Heart right ventricle (tissue), 16 donors: ENCODE measurements at regions of chr1 and their contacts with region 1.

Region 1: GRCh38 chr1:26874896-26875295 is 11.9 kb downstream of the SFN start:
- DNase-seq: no peak
- ATAC-seq: no peak
- H3K4me3 ChIP-seq: no peak overlapping the region
- H3K27ac ChIP-seq: no peak overlapping the region
- H3K4me1 ChIP-seq: peaks cover 0 to 5% (median 0%) of the 10 kb centered on the region in 9 donors
- H3K27me3 ChIP-seq: no peaks in the 10 kb centered on the region
- CTCF ChIP-seq: no peak

Region 2: DNA sequence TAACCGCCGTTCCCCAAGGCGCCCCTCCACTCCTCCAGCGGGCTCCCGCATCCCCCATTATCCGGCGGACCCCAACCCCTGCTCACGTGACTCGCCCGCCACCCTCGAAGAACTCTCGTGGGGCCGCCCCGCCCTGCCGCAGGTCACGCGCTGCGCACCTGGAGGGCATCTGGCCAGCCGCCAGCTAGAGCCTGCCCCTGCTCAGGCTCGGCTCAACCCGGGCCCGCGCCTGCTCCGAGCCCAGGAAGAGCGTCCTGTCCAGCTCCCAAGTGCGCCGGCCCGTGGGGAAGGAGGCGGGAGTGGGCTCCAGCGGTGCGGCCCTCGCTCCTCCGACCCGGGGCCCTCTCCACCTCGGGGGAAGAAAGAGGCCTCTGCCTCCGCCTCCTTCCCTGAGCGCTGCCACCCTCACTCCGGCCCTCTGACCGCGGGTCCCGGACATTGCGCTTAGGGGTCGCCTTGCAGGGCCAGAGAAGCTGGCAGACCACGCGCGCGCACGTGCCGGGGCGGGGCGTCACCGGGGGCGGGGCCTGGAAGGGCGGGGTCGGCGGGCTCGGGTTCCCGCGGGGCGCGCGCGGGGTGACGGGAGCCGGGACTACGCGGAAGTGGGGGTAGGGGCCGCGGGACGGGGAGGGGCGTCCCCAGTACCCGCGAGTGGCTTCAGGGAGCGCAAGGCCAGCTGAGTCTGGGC is 374.3 kb before region 1 on chr1:
- intact Hi-C with region 1: loop called in 1 of 10 experiments (anchors 10 kb)
- DNase-seq: peak; percentile 88 to 93
- ATAC-seq: peak; percentile 92 to 95 (median 94)
- H3K4me3 ChIP-seq: peak overlapping the region; percentile 15 to 90 (median 75)
- H3K27ac ChIP-seq: peak overlapping the region; percentile 77 to 98 (median 95)
- H3K4me1 ChIP-seq: peaks cover 2 to 21% (median 16%) of the 10 kb centered on the region in 9 donors
- H3K27me3 ChIP-seq: no peaks in the 10 kb centered on the region
- CTCF ChIP-seq: peak in 4 of 9 donors; percentile 7 to 37 (median 29)

Region 3: DNA sequence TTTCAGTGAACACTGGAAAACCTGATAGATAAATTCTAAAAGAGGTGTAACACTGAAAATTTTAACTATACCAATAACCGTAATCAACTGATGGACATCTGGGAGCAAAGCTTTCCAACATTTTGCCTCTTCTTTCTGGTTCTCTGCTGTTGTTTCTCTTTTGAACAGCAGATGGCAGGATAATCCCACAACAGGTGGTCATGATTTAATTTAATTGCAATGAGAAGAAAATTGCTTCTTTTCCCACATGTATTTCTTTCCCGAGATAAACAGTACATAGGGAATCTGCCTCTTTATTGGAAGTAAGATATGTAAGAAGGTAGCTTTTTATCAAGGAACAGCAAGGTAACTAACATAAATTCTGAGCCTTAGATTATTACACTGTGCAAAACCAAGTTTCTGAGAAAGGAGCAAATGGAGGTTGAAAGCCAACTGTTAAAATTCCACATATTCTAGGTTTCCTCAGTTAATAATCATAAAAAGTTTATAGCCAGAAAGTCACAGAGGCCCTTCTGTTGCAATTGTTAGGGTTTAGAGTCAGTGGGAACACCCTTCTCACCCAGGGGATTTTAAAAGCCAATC is 272.4 kb before region 1 on chr1:
- intact Hi-C with region 1: loop called in 9 of 10 experiments (anchors 1 to 5 kb)
- DNase-seq: peak in 1 of 2 donors; percentile 70
- ATAC-seq: peak in 3 of 8 donors; percentile 46 to 54 (median 52)
- H3K4me3 ChIP-seq: no peak overlapping the region
- H3K27ac ChIP-seq: no peak overlapping the region
- H3K4me1 ChIP-seq: peaks cover 0 to 8% (median 5%) of the 10 kb centered on the region in 9 donors
- H3K27me3 ChIP-seq: no peaks in the 10 kb centered on the region
- CTCF ChIP-seq: peak; percentile 77 to 95 (median 87)

Region 4: GRCh38 chr1:26614655-26615411 is 260.1 kb before region 1 on chr1:
- intact Hi-C with region 1: loop called in 1 of 10 experiments (anchors 5 kb)
- DNase-seq: no peak
- ATAC-seq: no peak
- H3K4me3 ChIP-seq: no peak overlapping the region
- H3K27ac ChIP-seq: no peak overlapping the region
- H3K4me1 ChIP-seq: peaks cover 2 to 29% (median 17%) of the 10 kb centered on the region in 9 donors
- H3K27me3 ChIP-seq: peaks cover 0 to under 1% (median 0%) of the 10 kb centered on the region in 7 donors
- CTCF ChIP-seq: no peak

Region 5: GRCh38 chr1:26811057-26811456 is 63.8 kb before region 1 on chr1:
- intact Hi-C with region 1: loop called in 8 of 10 experiments (anchors 2 to 10 kb)
- DNase-seq: no peak
- ATAC-seq: no peak
- H3K4me3 ChIP-seq: no peak overlapping the region
- H3K27ac ChIP-seq: no peak overlapping the region
- H3K4me1 ChIP-seq: peaks cover 0 to 13% (median 0%) of the 10 kb centered on the region in 9 donors
- H3K27me3 ChIP-seq: no peaks in the 10 kb centered on the region
- CTCF ChIP-seq: no peak

Region 6: DNA sequence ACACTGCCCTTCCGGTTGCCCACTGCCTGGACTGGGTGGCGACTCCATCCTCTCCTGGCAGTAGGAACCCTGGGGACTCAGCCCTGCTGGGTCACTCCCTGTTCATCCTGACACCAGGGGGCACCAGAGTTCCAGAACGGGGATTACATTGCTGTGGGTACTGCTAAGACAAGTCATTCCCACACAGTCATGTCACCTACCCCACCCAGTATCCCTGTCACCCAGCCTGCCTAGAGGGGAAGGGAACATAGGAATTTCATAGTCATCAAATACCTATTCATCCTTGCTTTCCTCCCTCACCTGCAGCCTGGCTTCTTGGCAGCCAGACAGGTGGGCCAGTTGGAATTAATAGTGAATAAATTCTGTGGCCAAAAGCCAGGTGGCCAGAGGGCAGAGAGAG is 21.7 kb before region 1 on chr1:
- intact Hi-C with region 1: loop called in 7 of 10 experiments (anchors 1 to 5 kb)
- DNase-seq: peak; percentile 80 to 84
- ATAC-seq: peak; percentile 82 to 91 (median 86)
- H3K4me3 ChIP-seq: no peak overlapping the region
- H3K27ac ChIP-seq: no peak overlapping the region
- H3K4me1 ChIP-seq: peaks cover 0 to 5% (median 0%) of the 10 kb centered on the region in 9 donors
- H3K27me3 ChIP-seq: no peaks in the 10 kb centered on the region
- CTCF ChIP-seq: peak; percentile 54 to 88 (median 84)